H1 (cell line): ENCODE measurements at regions of chr6 and their contacts with region 1.

Region 1: GRCh38 chr6:27132532-27133280 is 114.8 kb upstream of the PRSS16 start:
- DNase-seq: peak; percentile 95 to 98
- H3K4me3 ChIP-seq: peak overlapping the region; percentile 89 to 98 (median 90)
- H3K27ac ChIP-seq: peak overlapping the region; percentile 96
- H3K4me1 ChIP-seq: peaks cover 0 to 5% (median 0%) of the 10 kb centered on the region in 4 experiments; a peak in 2 of 7 replicates
- H3K27me3 ChIP-seq: no peaks in the 10 kb centered on the region
- CTCF ChIP-seq: no peak
- EP300 ChIP-seq: no peak
- POLR2A ChIP-seq: peak; percentile 98 to 99
- RAD21 ChIP-seq: no peak

Region 2: DNA sequence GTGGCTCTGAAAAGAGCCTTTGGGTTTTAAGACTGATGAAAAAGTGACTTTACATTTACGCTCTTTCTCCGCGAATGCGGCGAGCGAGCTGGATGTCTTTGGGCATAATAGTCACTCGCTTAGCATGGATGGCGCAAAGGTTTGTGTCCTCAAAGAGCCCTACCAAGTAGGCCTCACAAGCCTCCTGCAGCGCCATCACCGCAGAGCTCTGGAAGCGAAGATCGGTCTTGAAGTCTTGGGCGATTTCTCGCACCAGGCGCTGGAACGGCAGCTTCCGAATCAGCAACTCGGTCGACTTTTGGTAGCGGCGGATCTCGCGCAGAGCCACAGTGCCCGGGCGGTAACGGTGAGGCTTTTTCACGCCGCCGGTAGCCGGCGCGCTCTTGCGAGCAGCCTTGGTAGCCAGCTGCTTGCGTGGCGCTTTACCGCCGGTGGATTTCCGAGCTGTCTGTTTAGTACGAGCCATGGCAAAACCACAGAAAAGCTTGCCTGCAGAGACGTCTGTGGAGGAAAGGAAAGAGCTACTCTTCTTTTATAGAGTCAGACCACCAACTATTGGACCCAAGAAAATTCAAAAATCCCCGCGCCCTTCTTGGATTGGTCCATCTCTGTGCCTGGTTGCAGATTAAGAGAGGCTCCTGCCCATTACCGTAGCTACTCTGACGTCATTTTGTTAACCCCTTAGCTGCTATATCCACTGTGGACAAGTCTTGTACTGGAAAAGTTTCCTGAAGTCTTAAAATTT is 1100.9 kb before region 1 on chr6:
- CTCF ChIA-PET with region 1: no interaction called
- POLR2A ChIA-PET with region 1: interaction called, 34 read pairs
- DNase-seq: peak; percentile 82 to 88
- H3K4me3 ChIP-seq: peak overlapping the region; percentile 81 to 95 (median 92)
- H3K27ac ChIP-seq: peak overlapping the region; percentile 96
- H3K4me1 ChIP-seq: peaks cover 2 to 18% (median 13%) of the 10 kb centered on the region in 4 experiments; a peak in 5 of 7 replicates
- H3K27me3 ChIP-seq: no peaks in the 10 kb centered on the region
- CTCF ChIP-seq: no peak
- EP300 ChIP-seq: peak in 1 of 2 experiments; percentile 2; a peak in 1 of 3 replicates
- POLR2A ChIP-seq: peak; percentile 99 to 100
- RAD21 ChIP-seq: no peak

Region 3: GRCh38 chr6:26216356-26216885 is 916.3 kb before region 1 on chr6:
- CTCF ChIA-PET with region 1: no interaction called
- POLR2A ChIA-PET with region 1: interaction called, 47 read pairs
- DNase-seq: no peak
- H3K4me3 ChIP-seq: peak overlapping the region; percentile 87 to 98 (median 90)
- H3K27ac ChIP-seq: peak overlapping the region; percentile 97
- H3K4me1 ChIP-seq: peaks cover 0 to 8% (median 1%) of the 10 kb centered on the region in 4 experiments; a peak in 4 of 7 replicates
- H3K27me3 ChIP-seq: no peaks in the 10 kb centered on the region
- CTCF ChIP-seq: no peak
- EP300 ChIP-seq: no peak
- POLR2A ChIP-seq: peak; percentile 96 to 98
- RAD21 ChIP-seq: no peak

Region 4: DNA sequence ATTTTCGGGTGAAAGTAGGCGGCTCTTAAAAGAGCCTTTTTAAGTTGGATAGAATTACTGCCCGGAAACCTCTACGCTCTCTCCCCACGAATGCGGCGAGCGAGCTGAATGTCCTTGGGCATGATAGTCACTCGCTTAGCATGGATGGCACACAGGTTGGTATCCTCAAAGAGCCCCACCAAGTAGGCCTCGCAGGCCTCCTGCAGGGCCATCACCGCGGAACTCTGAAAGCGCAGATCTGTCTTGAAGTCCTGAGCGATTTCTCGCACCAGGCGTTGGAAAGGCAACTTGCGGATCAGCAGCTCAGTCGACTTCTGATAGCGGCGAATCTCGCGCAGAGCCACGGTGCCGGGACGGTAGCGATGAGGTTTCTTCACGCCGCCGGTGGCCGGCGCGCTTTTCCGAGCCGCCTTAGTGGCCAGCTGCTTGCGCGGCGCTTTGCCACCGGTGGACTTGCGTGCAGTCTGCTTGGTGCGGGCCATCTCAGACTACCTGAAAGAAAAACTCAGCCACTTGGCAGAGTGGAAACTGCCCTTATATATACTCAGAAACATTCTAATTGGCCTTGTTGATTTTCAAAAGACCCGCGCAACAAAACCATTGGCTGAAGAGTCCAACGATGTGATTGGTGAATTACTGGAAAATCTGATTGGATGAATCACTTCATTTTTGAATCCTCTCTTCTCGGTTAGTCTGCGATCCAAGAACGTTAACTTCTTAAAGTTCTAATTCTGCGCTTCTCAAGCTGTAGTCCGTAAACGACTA is 861.6 kb before region 1 on chr6:
- CTCF ChIA-PET with region 1: no interaction called
- POLR2A ChIA-PET with region 1: interaction called, 65 read pairs
- DNase-seq: peak in 1 of 2 experiments; percentile 85
- H3K4me3 ChIP-seq: peak overlapping the region; percentile 73 to 97 (median 88)
- H3K27ac ChIP-seq: peak overlapping the region; percentile 93
- H3K4me1 ChIP-seq: peaks cover 0 to 10% (median 4%) of the 10 kb centered on the region in 4 experiments; a peak in 4 of 7 replicates
- H3K27me3 ChIP-seq: no peaks in the 10 kb centered on the region
- CTCF ChIP-seq: no peak
- EP300 ChIP-seq: no peak
- POLR2A ChIP-seq: peak; percentile 94 to 100
- RAD21 ChIP-seq: no peak

Region 5: GRCh38 chr6:27177485-27178406 is 45.0 kb after region 1 on chr6:
- CTCF ChIA-PET with region 1: no interaction called
- POLR2A ChIA-PET with region 1: interaction called, 20 read pairs
- DNase-seq: peak in 1 of 2 experiments; percentile 84
- H3K4me3 ChIP-seq: peak overlapping the region; percentile 96 to 100 (median 100)
- H3K27ac ChIP-seq: peak overlapping the region; percentile 89
- H3K4me1 ChIP-seq: peaks cover 0 to 6% (median 1%) of the 10 kb centered on the region in 4 experiments; a peak in 3 of 7 replicates
- H3K27me3 ChIP-seq: no peaks in the 10 kb centered on the region
- CTCF ChIP-seq: peak; percentile 38 to 63 (median 47)
- EP300 ChIP-seq: no peak
- POLR2A ChIP-seq: peak; percentile 64 to 70
- RAD21 ChIP-seq: peak; percentile 48 to 63

Region 6: DNA sequence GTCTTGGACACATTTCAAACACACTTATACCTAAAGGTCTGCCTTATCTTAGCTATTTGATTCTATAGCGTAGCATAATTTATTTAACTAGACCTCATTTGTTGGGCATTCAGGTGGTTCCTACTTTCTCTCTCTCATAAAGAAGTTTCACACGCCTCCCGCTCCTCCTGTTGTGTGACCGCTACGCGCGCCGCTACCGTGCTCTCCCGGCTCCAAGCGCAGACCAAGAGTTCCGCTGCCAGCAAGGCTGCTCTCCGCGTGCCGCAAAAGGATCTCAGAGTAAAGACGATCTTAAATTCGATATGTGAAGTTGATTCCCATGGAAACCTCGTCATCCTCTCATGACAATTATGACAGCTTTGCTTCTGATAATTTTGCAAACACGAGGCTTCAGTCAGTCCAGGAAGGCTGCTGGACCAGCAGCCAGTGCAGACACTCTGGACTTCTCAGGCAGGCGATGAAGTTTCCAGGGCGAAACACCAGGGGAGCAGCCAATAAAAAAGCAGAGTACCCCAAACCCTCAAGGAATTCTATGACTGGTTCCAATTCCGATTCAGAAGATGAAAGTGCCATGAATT is 135.2 kb after region 1 on chr6:
- CTCF ChIA-PET with region 1: no interaction called
- POLR2A ChIA-PET with region 1: no interaction called
- DNase-seq: no peak
- H3K4me3 ChIP-seq: peak overlapping the region in 2 of 4 experiments; percentile 26 to 45; a peak in 2 of 8 replicates
- H3K27ac ChIP-seq: no peak overlapping the region
- H3K4me1 ChIP-seq: no peaks in the 10 kb centered on the region
- H3K27me3 ChIP-seq: no peaks in the 10 kb centered on the region; a peak in 1 of 7 replicates
- CTCF ChIP-seq: no peak
- EP300 ChIP-seq: no peak
- POLR2A ChIP-seq: no peak
- RAD21 ChIP-seq: no peak

Region 7: GRCh38 chr6:27864906-27865849 is 732.5 kb after region 1 on chr6:
- CTCF ChIA-PET with region 1: no interaction called
- POLR2A ChIA-PET with region 1: interaction called, 61 read pairs
- DNase-seq: peak in 1 of 2 experiments; percentile 86
- H3K4me3 ChIP-seq: peak overlapping the region; percentile 61 to 86 (median 79)
- H3K27ac ChIP-seq: peak overlapping the region; percentile 90
- H3K4me1 ChIP-seq: peaks cover 0 to 5% (median 1%) of the 10 kb centered on the region in 4 experiments; a peak in 2 of 7 replicates
- H3K27me3 ChIP-seq: no peaks in the 10 kb centered on the region
- CTCF ChIP-seq: no peak
- EP300 ChIP-seq: no peak
- POLR2A ChIP-seq: peak; percentile 93 to 97
- RAD21 ChIP-seq: no peak; a peak in 1 of 4 replicates